ENCODE measurements at regions of chr2 and their contacts with region 1.

Region 1: DNA sequence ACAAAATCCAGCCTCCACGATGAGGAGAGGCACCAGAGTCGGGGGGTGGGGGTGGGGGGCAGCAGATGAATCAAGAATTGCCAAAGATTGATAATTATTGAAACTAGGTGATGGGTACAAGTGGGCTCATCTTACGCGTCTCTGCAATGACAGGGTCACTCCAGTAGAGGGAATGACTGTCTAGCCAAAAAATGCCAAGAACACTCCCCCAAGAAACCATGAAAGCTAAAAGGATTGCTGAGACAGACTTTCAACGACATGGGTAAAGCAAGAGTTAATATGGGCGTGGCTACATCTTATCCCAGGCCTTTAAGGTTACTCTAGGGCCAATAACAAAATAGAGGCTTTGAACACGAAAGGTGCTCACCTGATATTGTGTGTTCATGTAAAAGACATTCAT is 86.5 kb downstream of the STK39 start:
- DNase-seq: no peak
- H3K4me3 Mint-ChIP-seq: no peak overlapping the region
- H3K27ac Mint-ChIP-seq: no peak overlapping the region
- H3K4me1 Mint-ChIP-seq: peaks cover 33% of the 10 kb centered on the region
- H3K27me3 Mint-ChIP-seq: no peaks in the 10 kb centered on the region

Region 2: DNA sequence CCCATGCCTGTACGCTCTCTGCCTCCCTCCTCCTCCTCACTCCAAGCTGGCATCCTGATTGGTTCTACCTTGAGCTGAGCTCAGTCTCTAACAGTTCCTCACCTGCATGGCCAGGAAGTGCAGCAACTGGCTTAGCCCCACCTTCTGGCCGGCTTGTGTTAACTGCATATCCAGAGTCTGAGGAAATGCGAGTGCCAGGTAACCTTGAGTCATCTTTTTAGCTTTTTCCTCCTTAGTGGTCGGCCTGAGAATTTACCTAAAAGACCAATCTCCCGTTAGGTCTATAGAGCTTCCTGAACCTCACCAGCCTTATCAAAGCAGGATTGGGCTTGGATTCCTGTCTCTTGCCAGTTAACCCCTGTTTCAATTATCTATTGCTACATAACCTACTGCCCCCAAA is 176.0 kb after region 1 on chr2:
- CTCF ChIA-PET with region 1: interaction called, 9 read pairs
- POLR2A ChIA-PET with region 1: no interaction called
- intact Hi-C with region 1: loop called (anchors 2 kb)
- DNase-seq: peak; percentile 72
- H3K4me3 Mint-ChIP-seq: no peak overlapping the region
- H3K27ac Mint-ChIP-seq: no peak overlapping the region
- H3K4me1 Mint-ChIP-seq: peaks cover 8% of the 10 kb centered on the region
- H3K27me3 Mint-ChIP-seq: no peaks in the 10 kb centered on the region

Measured in activated CD4-positive, alpha-beta memory T cell treated with anti-CD3 and anti-CD28 coated beads for 36 hours (primary cell).